Posterior cingulate gyrus (tissue), 11 donors: ENCODE measurements at regions of chr7 and their contacts with region 1.

Region 1: DNA sequence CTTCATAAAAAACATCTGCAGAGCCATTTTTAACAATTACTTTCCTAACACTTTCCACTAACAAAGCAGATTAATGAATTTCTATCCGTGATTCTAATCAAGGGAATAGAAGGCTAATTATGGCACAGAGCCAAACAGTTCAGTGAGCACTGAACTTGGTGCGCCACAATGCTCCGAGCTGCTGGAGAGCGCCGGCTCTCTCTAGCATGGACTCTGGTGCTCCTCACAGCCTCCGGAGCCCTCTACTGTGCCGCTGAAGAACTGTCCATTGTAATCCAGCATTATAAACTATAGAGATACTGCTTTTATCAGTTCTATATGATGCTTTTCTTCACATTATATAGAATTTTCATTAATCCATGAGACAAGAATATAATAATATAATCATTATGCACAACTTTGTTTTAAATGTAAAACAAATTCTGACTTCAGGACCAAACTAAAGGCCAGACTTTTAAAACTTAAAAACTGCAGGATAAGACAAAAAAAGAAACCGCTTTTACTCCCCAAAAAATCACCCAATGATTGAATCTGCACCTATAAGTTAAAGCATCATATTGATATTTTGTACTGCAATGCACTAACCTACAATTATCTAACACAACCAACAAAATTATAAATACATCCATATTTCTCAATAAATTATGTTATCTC is 123.6 kb downstream of the RNF32 start:
- DNase-seq: peak; percentile 54 to 96 (median 74)

Region 2: GRCh38 chr7:156515911-156516790 is 248.0 kb before region 1 on chr7:
- intact Hi-C with region 1: loop called (anchors 1 kb)
- DNase-seq: peak in 4 of 10 donors; percentile 17 to 80 (median 38)

Region 3: DNA sequence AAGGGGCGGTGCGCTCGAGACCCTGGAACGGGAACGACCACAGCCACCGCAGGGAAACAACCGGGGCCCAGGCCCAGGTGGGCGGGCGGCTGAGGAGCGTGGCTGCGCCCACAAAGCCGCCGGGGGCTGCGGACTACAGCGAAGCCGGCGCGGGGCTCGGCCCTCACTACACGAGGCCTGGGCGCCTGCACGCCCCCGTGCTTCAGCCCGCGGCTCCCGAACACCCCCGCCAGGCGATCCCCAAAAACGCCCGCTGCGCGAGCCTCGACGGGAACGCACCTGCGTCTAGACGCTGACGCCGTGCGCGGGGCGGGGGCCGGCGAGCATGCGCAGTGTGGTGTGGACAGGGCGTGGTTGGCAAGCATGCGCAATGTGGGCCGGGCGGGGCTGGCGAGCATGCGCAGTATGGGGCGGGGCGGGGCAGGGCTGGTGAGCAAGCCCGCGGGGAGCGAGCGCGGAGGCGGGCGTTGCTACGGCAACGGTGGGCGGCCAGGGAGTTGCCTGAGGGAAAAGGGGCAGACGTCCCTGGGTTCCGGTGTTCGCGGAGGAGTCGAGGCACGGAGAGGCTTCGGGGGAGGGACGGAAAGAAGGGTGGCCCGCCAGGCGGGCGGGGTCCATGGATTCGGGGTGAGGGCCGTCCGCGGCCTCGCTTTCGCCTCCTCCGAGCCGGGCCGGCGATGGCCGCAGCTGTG is 123.7 kb before region 1 on chr7 and contains the start of gene RNF32:
- intact Hi-C with region 1: loop called (anchors 10 kb)
- DNase-seq: peak; percentile 82 to 99 (median 89)

Region 4: GRCh38 chr7:157010588-157011332 is 246.6 kb after region 1 on chr7 and contains the start of gene MNX1:
- intact Hi-C with region 1: no loop called
- DNase-seq: peak in 1 of 10 donors; percentile 67

Region 5: DNA sequence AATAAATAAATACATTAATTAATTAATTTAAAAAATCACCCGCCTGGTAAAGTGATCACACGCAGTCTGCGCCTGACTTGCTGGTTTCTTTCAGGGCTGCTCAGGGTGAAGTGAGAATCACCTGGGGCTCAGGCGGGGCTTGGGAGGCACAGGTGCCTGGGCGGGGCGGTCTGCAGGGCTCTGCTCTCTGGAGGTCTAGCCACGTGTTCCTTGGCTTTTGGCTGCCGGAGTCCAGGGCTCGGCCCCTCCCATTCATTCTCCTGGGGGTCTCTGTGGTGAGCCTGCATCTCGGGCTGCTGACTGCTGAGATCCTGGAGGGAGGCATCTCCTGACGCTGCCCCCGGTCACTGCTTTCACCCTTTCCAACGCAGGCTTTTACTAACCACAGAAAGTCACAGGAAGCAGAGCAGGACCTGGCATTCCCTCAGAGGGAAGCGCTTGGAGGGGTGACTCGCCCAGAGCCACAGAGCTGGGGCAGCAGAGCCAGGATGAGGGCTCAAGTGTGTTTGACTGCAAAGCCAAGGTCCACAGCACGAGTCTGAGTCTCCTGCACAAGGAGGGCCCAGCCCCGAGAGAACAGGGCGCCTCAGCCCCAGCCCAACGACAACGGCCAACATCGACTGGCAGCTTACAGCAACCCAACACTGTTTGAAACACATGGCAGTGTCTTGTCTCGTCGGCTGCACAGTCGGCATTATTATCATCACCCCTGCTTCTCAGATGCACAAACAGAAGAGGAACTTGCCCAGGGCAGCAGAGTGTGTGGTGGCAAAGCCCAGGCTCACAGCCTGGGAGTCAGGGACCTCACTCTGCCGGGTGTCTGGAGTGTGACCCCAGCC is 268.7 kb after region 1 on chr7:
- intact Hi-C with region 1: no loop called
- DNase-seq: peak in 2 of 10 donors; percentile 43 to 75